ENCODE measurements at regions of chr6 and their contacts with region 1.

Region 1: GRCh38 chr6:32096394-32097258 is 12.5 kb downstream of the TNXB start:
- DNase-seq: peak; percentile 77
- H3K4me3 ChIP-seq: peak overlapping the region in 1 of 2 experiments; percentile 9; a peak in 2 of 4 replicates
- H3K27ac ChIP-seq: no peak overlapping the region
- H3K4me1 ChIP-seq: peaks cover 0 to 9% of the 10 kb centered on the region in 2 experiments; a peak in 1 of 4 replicates
- H3K27me3 ChIP-seq: peaks cover 70% of the 10 kb centered on the region
- CTCF ChIP-seq: peak; percentile 29; the same call in 1 of the 2 replicates
- EP300 ChIP-seq: no peak
- RAD21 ChIP-seq: no peak

Region 2: GRCh38 chr6:32108094-32108627 is 11.5 kb after region 1 on chr6:
- CTCF ChIA-PET with region 1: interaction called, 12 read pairs
- POLR2A ChIA-PET with region 1: interaction called, 5 read pairs
- DNase-seq: peak; percentile 32
- H3K4me3 ChIP-seq: no peak overlapping the region
- H3K27ac ChIP-seq: no peak overlapping the region
- H3K4me1 ChIP-seq: peaks cover 0 to 9% of the 10 kb centered on the region in 2 experiments; a peak in 3 of 4 replicates
- H3K27me3 ChIP-seq: peaks cover 7% of the 10 kb centered on the region
- CTCF ChIP-seq: no peak
- EP300 ChIP-seq: no peak
- RAD21 ChIP-seq: no peak

Region 3: DNA sequence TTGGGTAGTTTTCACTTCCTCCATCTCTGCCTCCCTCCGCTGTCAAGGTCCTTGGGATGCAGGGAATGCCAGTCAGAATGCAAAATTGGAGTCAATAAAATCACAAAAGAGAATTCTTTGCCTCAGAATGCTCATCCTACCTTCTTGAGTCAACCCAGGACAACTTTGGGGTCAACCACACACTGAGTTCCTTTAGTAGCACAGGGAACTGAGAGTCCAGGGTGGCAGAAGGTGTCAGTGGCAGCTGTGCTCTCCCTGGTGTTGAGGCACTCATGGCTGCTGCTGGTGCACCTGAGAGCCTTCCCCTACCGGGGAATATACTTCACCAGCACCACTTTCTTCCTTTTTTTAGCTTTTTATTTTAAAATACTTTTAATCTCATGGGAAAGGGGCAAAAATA is 128.1 kb after region 1 on chr6:
- CTCF ChIA-PET with region 1: no interaction called
- POLR2A ChIA-PET with region 1: no interaction called
- DNase-seq: no peak
- H3K4me3 ChIP-seq: no peak overlapping the region
- H3K27ac ChIP-seq: no peak overlapping the region
- H3K4me1 ChIP-seq: no peaks in the 10 kb centered on the region
- H3K27me3 ChIP-seq: peaks cover 48% of the 10 kb centered on the region
- CTCF ChIP-seq: no peak
- EP300 ChIP-seq: no peak
- RAD21 ChIP-seq: no peak

Region 4: GRCh38 chr6:32906539-32906938 is 809.9 kb after region 1 on chr6:
- CTCF ChIA-PET with region 1: no interaction called
- POLR2A ChIA-PET with region 1: no interaction called
- DNase-seq: no peak
- H3K4me3 ChIP-seq: no peak overlapping the region
- H3K27ac ChIP-seq: no peak overlapping the region
- H3K4me1 ChIP-seq: no peaks in the 10 kb centered on the region
- H3K27me3 ChIP-seq: no peaks in the 10 kb centered on the region
- CTCF ChIP-seq: no peak
- EP300 ChIP-seq: no peak
- RAD21 ChIP-seq: no peak